PC-3 (cell line): ENCODE measurements at regions of chr20 and their contacts with region 1.

Region 1: GRCh38 chr20:44310664-44311639 is at the start of gene FITM2:
- DNase-seq: peak; percentile 98
- ATAC-seq: peak; percentile 89
- H3K4me3 ChIP-seq: peak within 1 kb of the TSS; percentile 92
- H3K27ac ChIP-seq: no peak within 1 kb of the TSS
- H3K4me1 ChIP-seq: peaks cover 11% of the 10 kb centered on the region
- H3K27me3 ChIP-seq: no peaks in the 10 kb centered on the region
- CTCF ChIP-seq: peak; percentile 96
- total RNA-seq, gene FITM2: 8.8 and 9.9 TPM in 2 replicates

Region 2: DNA sequence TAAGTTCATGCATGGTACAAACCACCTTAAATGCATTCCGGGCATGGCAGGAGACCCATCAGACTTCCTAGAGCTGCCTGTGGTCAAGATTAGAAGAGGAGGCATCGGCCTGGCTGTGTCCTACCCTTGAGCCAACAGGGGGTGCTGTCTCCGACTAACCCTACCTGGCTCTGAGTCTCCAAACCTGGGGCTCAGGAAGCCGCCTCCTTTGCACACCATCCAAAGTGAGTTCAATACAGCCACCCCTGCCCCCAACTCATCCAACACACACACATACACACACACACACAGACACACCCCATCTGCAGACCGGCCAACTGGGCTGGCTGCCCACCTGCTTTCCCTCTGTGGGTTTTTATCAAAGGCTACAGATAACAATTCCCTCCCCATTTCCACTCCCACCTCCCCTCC is 201.0 kb before region 1 on chr20:
- CTCF ChIA-PET with region 1: no interaction called
- POLR2A ChIA-PET with region 1: no interaction called
- intact Hi-C with region 1: loop called (anchors 10 kb)
- DNase-seq: no peak
- ATAC-seq: no peak
- H3K4me3 ChIP-seq: no peak overlapping the region
- H3K27ac ChIP-seq: no peak overlapping the region
- H3K4me1 ChIP-seq: peaks cover 8% of the 10 kb centered on the region; the same call in 1 of the 2 replicates
- H3K27me3 ChIP-seq: no peaks in the 10 kb centered on the region
- CTCF ChIP-seq: peak; percentile 48

Region 3: GRCh38 chr20:44217342-44218092 is 93.4 kb before region 1 on chr20:
- CTCF ChIA-PET with region 1: interaction called, 36 read pairs
- POLR2A ChIA-PET with region 1: no interaction called
- intact Hi-C with region 1: loop called (anchors 1 kb)
- DNase-seq: peak; percentile 91
- ATAC-seq: peak; percentile 73
- H3K4me3 ChIP-seq: no peak overlapping the region
- H3K27ac ChIP-seq: no peak overlapping the region
- H3K4me1 ChIP-seq: peaks cover 14% of the 10 kb centered on the region; the same call in 1 of the 2 replicates
- H3K27me3 ChIP-seq: no peaks in the 10 kb centered on the region
- CTCF ChIP-seq: peak; percentile 99

Region 4: GRCh38 chr20:44475694-44476560 is 165.0 kb after region 1 on chr20 and contains the start of gene TTPAL:
- CTCF ChIA-PET with region 1: interaction called, 4 read pairs
- POLR2A ChIA-PET with region 1: no interaction called
- intact Hi-C with region 1: loop called (anchors 5 kb)
- DNase-seq: peak; percentile 97
- ATAC-seq: peak; percentile 92
- H3K4me3 ChIP-seq: peak within 1 kb of the TSS; percentile 77
- H3K27ac ChIP-seq: peak within 1 kb of the TSS; percentile 48
- H3K4me1 ChIP-seq: peaks cover 20% of the 10 kb centered on the region
- H3K27me3 ChIP-seq: no peaks in the 10 kb centered on the region
- CTCF ChIP-seq: peak; percentile 41; the same call in 1 of the 2 replicates
- total RNA-seq, gene TTPAL: 14.0 and 17.9 TPM in 2 replicates